ENCODE measurements at regions of chr1 and their contacts with region 1.

Region 1: DNA sequence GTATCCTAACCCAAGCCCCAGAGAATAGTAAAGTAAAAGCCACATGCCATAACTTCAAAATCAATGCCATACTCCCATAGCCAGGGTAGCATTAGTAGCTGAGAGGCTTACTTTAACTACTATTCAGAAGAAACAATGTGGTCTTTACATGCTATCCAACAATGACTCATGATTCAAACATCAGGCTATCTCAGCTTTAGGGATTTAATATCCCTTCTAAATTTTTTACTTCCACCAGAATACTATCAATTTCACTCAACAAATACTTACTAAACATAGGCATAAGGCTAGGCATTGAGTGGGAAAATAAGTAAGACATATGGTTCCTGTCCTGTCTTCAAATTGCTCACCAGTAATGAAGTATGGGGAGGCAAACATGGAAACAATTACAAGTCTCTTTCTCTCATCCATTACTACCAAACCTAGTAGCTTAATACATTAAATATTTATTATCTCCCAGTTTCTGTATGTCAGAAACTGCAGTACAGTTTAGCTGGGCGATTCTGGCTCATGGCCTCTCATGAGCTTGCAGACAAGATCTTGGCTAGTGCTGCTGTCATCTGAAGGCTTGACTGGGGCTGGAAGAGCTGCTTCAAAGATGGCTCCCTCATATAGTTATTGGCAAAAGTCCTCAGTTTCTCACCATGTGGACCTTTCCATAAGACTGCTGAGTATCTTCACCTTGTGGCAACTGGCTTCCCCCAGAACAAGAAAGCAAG is 30.7 kb downstream of the EVI5 start:
- DNase-seq: no peak
- ATAC-seq: no peak
- H3K4me3 ChIP-seq: no peak overlapping the region
- H3K27ac ChIP-seq: peak overlapping the region in 3 of 10 donors; percentile 2 to 85 (median 80)
- H3K4me1 ChIP-seq: peaks cover 4 to 28% (median 15%) of the 10 kb centered on the region in 9 donors
- H3K27me3 ChIP-seq: no peaks in the 10 kb centered on the region
- CTCF ChIP-seq: no peak

Region 2: DNA sequence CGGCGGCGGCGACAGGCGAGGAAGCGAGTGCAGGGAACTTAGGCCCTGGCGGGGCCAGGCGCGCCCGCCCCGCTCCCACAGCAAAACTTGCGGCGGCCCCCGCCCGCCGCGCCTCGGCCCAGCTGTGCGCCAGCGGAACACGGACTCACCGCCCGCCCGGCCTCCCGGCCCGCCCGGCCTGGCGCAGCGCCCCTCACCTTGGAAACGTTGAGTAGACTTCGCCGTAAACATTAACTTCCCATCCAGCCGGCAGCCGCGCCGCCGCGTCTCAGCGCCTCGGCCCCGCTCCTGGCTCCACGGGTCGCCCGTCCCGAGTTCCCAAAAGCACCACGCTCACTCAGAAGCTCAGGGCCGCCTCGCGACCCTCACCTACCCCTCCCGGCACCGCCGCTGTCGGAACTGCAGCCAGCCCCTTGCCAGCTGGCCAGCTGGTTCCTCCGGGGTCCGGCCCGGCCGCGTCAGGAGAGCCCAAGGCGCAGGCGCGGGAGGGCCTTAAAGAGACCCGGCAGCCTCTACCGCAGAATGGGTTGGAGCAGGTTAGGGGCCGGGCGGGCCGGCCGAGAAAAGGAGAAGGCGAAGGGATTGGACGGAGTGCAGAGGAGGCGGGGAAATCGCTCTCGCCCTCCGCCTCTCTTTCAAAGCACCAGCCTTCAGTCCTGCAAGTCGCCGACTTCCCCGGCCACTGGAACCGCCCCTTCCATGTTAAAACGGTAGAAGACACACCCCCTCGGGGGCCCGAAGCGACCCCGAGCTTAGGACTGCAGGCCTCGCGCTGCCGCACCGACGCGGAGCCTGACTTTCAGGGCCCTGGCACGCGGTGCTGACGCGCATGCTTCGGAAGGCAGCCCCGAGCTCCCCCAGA is 30.7 kb after region 1 on chr1 and contains the start of gene EVI5:
- intact Hi-C with region 1: loop called in 1 of 10 experiments (anchors 2 kb)
- DNase-seq: peak; percentile 94
- ATAC-seq: peak; percentile 96 to 98 (median 97)
- H3K4me3 ChIP-seq: peak within 1 kb of the TSS; percentile 47 to 91 (median 75)
- H3K27ac ChIP-seq: peak within 1 kb of the TSS; percentile 67 to 100 (median 95)
- H3K4me1 ChIP-seq: peaks cover 0 to 49% (median 26%) of the 10 kb centered on the region in 9 donors
- H3K27me3 ChIP-seq: no peaks in the 10 kb centered on the region
- CTCF ChIP-seq: peak in 4 of 9 donors; percentile 10 to 45 (median 29)
- total RNA-seq, gene EVI5: 20.5 to 46.2 (median 27.4) TPM

Region 3: GRCh38 chr1:92843429-92844352 is 89.5 kb after region 1 on chr1:
- intact Hi-C with region 1: no loop called
- DNase-seq: no peak
- ATAC-seq: no peak
- H3K4me3 ChIP-seq: no peak overlapping the region
- H3K27ac ChIP-seq: no peak overlapping the region
- H3K4me1 ChIP-seq: peaks cover 0 to 17% (median 10%) of the 10 kb centered on the region in 9 donors
- H3K27me3 ChIP-seq: no peaks in the 10 kb centered on the region
- CTCF ChIP-seq: no peak

Measured in heart right ventricle (tissue), 16 donors.